Dorsolateral prefrontal cortex (tissue), 120 donors: ENCODE measurements at regions of chr7 and their contacts with region 1.

Region 1: GRCh38 chr7:107743567-107744344 is at the start of gene CBLL1:
- DNase-seq: peak; percentile 93 to 97 (median 96)
- H3K4me3 ChIP-seq: peak within 1 kb of the TSS; percentile 66 to 100 (median 93)
- H3K27ac ChIP-seq: peak within 1 kb of the TSS; percentile 93 to 100 (median 99)
- H3K27me3 ChIP-seq: no peaks in the 10 kb centered on the region
- CTCF ChIP-seq: peak; percentile 51 to 89 (median 78)
- total RNA-seq, gene CBLL1: 18.6 to 38.1 (median 28.9) TPM

Region 2: DNA sequence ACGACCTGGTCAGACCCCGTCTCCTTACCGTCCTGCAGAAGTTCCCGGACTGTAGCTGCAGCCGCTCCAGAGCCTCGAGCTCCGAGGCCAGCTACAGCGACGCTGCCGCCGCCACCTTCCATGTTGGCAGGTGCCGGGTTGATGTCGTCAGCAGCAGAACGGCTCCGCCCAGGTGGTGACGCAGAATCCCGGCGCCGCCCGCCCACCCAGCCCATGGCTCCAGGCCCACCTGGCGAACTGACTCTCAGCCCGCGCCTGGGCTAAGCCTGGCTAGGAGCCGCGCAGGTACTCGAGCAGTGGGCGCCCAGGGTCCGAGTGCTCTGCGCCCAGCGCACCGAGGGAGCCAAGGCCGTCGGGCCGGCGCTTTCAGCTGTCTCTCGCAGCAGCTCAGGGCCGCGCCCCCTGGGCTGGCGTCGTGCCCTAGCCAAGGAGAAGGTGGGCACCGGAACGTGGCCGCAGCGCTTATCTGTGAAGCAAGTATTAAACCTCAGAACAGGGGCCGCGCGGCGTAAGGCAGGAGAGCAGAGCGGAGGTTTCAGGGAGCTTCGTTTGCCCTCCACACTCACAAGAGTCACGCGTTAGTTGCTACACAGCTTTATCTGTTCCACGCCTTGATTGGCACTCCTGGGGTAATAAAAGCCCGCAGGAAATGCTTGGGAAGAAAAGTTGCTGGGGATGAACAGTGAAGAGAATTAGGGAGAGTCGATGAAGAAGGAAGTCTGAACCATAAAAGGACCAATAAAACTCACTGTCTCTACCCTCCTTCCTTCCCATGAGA is 179.8 kb before region 1 on chr7 and contains the starts of genes COG5 and DUS4L:
- intact Hi-C with region 1: loop called in 1 of 2 experiments (anchors 10 kb)
- DNase-seq: peak; percentile 66 to 87 (median 78)
- H3K4me3 ChIP-seq: peak within 1 kb of the TSS; percentile 66 to 99 (median 93)
- H3K27ac ChIP-seq: peak within 1 kb of the TSS; percentile 59 to 98 (median 88)
- H3K27me3 ChIP-seq: no peaks in the 10 kb centered on the region
- CTCF ChIP-seq: peak in 17 of 56 donors; percentile 3 to 32 (median 19)
- total RNA-seq, gene COG5: 37.1 to 87.3 (median 52.6) TPM
- total RNA-seq, gene DUS4L: 5.6 to 15.9 (median 10.8) TPM

Region 3: GRCh38 chr7:107579885-107580715 is 163.7 kb before region 1 on chr7 and contains the start of gene BCAP29:
- intact Hi-C with region 1: loop called in 1 of 2 experiments (anchors 5 kb)
- DNase-seq: peak; percentile 38 to 78 (median 56)
- H3K4me3 ChIP-seq: peak within 1 kb of the TSS; percentile 62 to 98 (median 84)
- H3K27ac ChIP-seq: peak within 1 kb of the TSS; percentile 63 to 96 (median 86)
- H3K27me3 ChIP-seq: no peaks in the 10 kb centered on the region
- CTCF ChIP-seq: peak in 40 of 56 donors; percentile 10 to 57 (median 36)
- total RNA-seq, gene BCAP29: 61.4 to 148 (median 112) TPM

Region 4: GRCh38 chr7:107697321-107698049 is 46.3 kb before region 1 on chr7:
- intact Hi-C with region 1: loop called in 1 of 2 experiments (anchors 5 kb)
- DNase-seq: peak in 3 of 10 donors; percentile 18 to 28 (median 20)
- H3K4me3 ChIP-seq: no peak overlapping the region
- H3K27ac ChIP-seq: peak overlapping the region in 53 of 59 donors; percentile 4 to 92 (median 71)
- H3K27me3 ChIP-seq: no peaks in the 10 kb centered on the region
- CTCF ChIP-seq: no peak

Region 5: GRCh38 chr7:107879400-107880035 is 135.8 kb after region 1 on chr7:
- intact Hi-C with region 1: loop called (anchors 5 kb)
- DNase-seq: peak in 1 of 10 donors; percentile 61
- H3K4me3 ChIP-seq: no peak overlapping the region
- H3K27ac ChIP-seq: no peak overlapping the region
- H3K27me3 ChIP-seq: no peaks in the 10 kb centered on the region
- CTCF ChIP-seq: peak; percentile 55 to 85 (median 72)

Region 6: GRCh38 chr7:107890962-107891635 is 147.3 kb after region 1 on chr7 and contains the start of gene DLD:
- intact Hi-C with region 1: loop called in 1 of 2 experiments (anchors 2 kb)
- DNase-seq: peak; percentile 93 to 98 (median 96)
- H3K4me3 ChIP-seq: peak within 1 kb of the TSS; percentile 61 to 98 (median 87)
- H3K27ac ChIP-seq: peak within 1 kb of the TSS; percentile 60 to 99 (median 91)
- H3K27me3 ChIP-seq: no peaks in the 10 kb centered on the region
- CTCF ChIP-seq: peak in 39 of 56 donors; percentile 7 to 58 (median 28)
- total RNA-seq, gene DLD: 37.6 to 101 (median 76.6) TPM

Region 7: GRCh38 chr7:107934991-107935770 is 191.4 kb after region 1 on chr7:
- intact Hi-C with region 1: no loop called
- DNase-seq: no peak
- H3K4me3 ChIP-seq: no peak overlapping the region
- H3K27ac ChIP-seq: peak overlapping the region in 5 of 59 donors; percentile 2 to 48 (median 7)
- H3K27me3 ChIP-seq: no peaks in the 10 kb centered on the region
- CTCF ChIP-seq: no peak

Region 8: GRCh38 chr7:108146070-108146837 is 402.5 kb after region 1 on chr7:
- intact Hi-C with region 1: loop called (anchors 5 to 10 kb)
- DNase-seq: peak in 8 of 10 donors; percentile 45 to 75 (median 56)
- H3K4me3 ChIP-seq: peak overlapping the region in 52 of 59 donors; percentile 16 to 61 (median 38)
- H3K27ac ChIP-seq: peak overlapping the region in 29 of 59 donors; percentile 1 to 79 (median 29)
- H3K27me3 ChIP-seq: no peaks in the 10 kb centered on the region
- CTCF ChIP-seq: peak; percentile 62 to 91 (median 83)